T-cell (primary cell): ENCODE measurements at regions of chr12 and their contacts with region 1.

Region 1: GRCh38 chr12:65192963-65193516 is 23.7 kb downstream of the LEMD3 start:
- DNase-seq: no peak
- ATAC-seq: no peak
- H3K4me3 ChIP-seq: no peak overlapping the region
- H3K4me3 Mint-ChIP-seq: no peak overlapping the region
- H3K27ac ChIP-seq: no peak overlapping the region
- H3K27ac Mint-ChIP-seq: no peak overlapping the region
- H3K4me1 ChIP-seq: peaks cover 0 to 13% of the 10 kb centered on the region in 2 experiments
- H3K4me1 Mint-ChIP-seq: peaks cover 67 to 79% (median 78%) of the 10 kb centered on the region in 3 donors
- H3K27me3 ChIP-seq: no peaks in the 10 kb centered on the region
- H3K27me3 Mint-ChIP-seq: no peaks in the 10 kb centered on the region

Region 2: GRCh38 chr12:65269603-65270002 is 76.6 kb after region 1 on chr12:
- CTCF ChIA-PET with region 1: no interaction called
- POLR2A ChIA-PET with region 1: interaction called in 1 of 2 experiments, 11 read pairs
- DNase-seq: no peak
- ATAC-seq: no peak
- H3K4me3 ChIP-seq: no peak overlapping the region
- H3K4me3 Mint-ChIP-seq: no peak overlapping the region
- H3K27ac ChIP-seq: no peak overlapping the region
- H3K27ac Mint-ChIP-seq: no peak overlapping the region
- H3K4me1 ChIP-seq: no peaks in the 10 kb centered on the region
- H3K4me1 Mint-ChIP-seq: no peaks in the 10 kb centered on the region
- H3K27me3 ChIP-seq: peaks cover 0 to 7% of the 10 kb centered on the region in 2 experiments
- H3K27me3 Mint-ChIP-seq: peaks cover 13 to 18% of the 10 kb centered on the region in 2 donors

Region 3: GRCh38 chr12:65300680-65301349 is 107.8 kb after region 1 on chr12:
- CTCF ChIA-PET with region 1: no interaction called
- POLR2A ChIA-PET with region 1: no interaction called
- DNase-seq: no peak
- ATAC-seq: no peak
- H3K4me3 ChIP-seq: no peak overlapping the region
- H3K4me3 Mint-ChIP-seq: no peak overlapping the region
- H3K27ac ChIP-seq: no peak overlapping the region
- H3K27ac Mint-ChIP-seq: no peak overlapping the region
- H3K4me1 ChIP-seq: no peaks in the 10 kb centered on the region
- H3K4me1 Mint-ChIP-seq: no peaks in the 10 kb centered on the region
- H3K27me3 ChIP-seq: no peaks in the 10 kb centered on the region
- H3K27me3 Mint-ChIP-seq: peaks cover 27 to 32% of the 10 kb centered on the region in 2 donors